Thyroid gland (tissue), 4 donors: ENCODE measurements at regions of chr14 and their contacts with region 1.

Region 1: GRCh38 chr14:53929871-53930715 is 26.5 kb downstream of the BMP4 start:
- DNase-seq: peak; percentile 57 to 70
- H3K4me3 ChIP-seq: no peak overlapping the region
- H3K27ac ChIP-seq: no peak overlapping the region
- H3K4me1 ChIP-seq: peaks cover 4 to 6% of the 10 kb centered on the region in 2 donors
- H3K27me3 ChIP-seq: no peaks in the 10 kb centered on the region
- CTCF ChIP-seq: peak in 5 of 6 experiments; percentile 36 to 59 (median 57)
- POLR2A ChIP-seq: no peak

Region 2: GRCh38 chr14:54085232-54085761 is 155.2 kb after region 1 on chr14:
- intact Hi-C with region 1: no loop called
- DNase-seq: no peak
- H3K4me3 ChIP-seq: no peak overlapping the region
- H3K27ac ChIP-seq: no peak overlapping the region
- H3K4me1 ChIP-seq: peaks cover 0 to 9% of the 10 kb centered on the region in 2 donors
- H3K27me3 ChIP-seq: no peaks in the 10 kb centered on the region
- CTCF ChIP-seq: no peak
- POLR2A ChIP-seq: no peak

Region 3: DNA sequence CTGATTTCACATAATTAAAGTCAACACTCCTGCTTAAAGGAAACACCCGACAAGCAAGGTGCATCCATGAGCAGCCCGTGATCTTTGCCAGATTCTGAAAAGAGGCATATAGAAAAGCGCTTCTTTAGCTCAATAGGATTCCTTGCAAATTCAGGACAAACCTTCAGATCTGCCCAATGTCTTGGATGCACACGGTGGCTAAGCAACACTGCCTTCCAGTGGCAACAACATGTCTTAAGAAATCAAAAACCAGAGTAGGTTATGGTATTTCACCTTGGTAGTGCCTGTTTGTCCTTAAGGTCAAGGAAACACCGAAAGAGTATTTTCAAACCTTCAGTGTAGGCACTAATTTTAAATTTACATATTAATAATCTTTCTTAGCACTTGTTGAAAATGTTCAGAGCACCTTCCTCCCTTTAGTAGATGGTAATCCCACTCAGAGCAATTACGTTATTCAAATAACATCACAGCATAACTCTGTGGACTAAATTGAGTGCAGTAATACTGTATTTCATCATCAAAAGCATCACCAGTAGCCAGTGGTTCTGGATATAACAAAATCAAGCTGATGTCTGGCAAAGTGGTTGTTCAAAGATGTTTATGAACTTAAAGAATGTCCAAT is 408.7 kb after region 1 on chr14:
- intact Hi-C with region 1: loop called (anchors 10 kb)
- DNase-seq: peak; percentile 30 to 50
- H3K4me3 ChIP-seq: no peak overlapping the region
- H3K27ac ChIP-seq: no peak overlapping the region
- H3K4me1 ChIP-seq: no peaks in the 10 kb centered on the region
- H3K27me3 ChIP-seq: no peaks in the 10 kb centered on the region
- CTCF ChIP-seq: peak in 5 of 6 experiments; percentile 15 to 62 (median 53)
- POLR2A ChIP-seq: no peak